Heart left ventricle (tissue), 16 donors: ENCODE measurements at regions of chr14 and their contacts with region 1.

Region 1: GRCh38 chr14:103552011-103552845 is 10.2 kb downstream of the BAG5 start:
- DNase-seq: peak in 3 of 5 donors; percentile 49 to 80 (median 61)
- ATAC-seq: peak; percentile 27 to 57 (median 40)
- H3K4me3 ChIP-seq: peak overlapping the region in 8 of 12 donors; percentile 24 to 43 (median 30)
- H3K27ac ChIP-seq: peak overlapping the region; percentile 63 to 98 (median 91)
- H3K4me1 ChIP-seq: peaks cover 0 to 83% (median 45%) of the 10 kb centered on the region in 12 donors
- H3K27me3 ChIP-seq: no peaks in the 10 kb centered on the region
- CTCF ChIP-seq: no peak
- POLR2A ChIP-seq: no peak

Region 2: GRCh38 chr14:103518422-103519042 is 33.7 kb before region 1 on chr14:
- intact Hi-C with region 1: loop called in 4 of 10 experiments (anchors 2 to 5 kb)
- DNase-seq: peak; percentile 64 to 85 (median 70)
- ATAC-seq: peak; percentile 34 to 62 (median 42)
- H3K4me3 ChIP-seq: no peak overlapping the region
- H3K27ac ChIP-seq: peak overlapping the region in 9 of 12 donors; percentile 2 to 96 (median 56)
- H3K4me1 ChIP-seq: peaks cover 0 to 79% (median 52%) of the 10 kb centered on the region in 12 donors
- H3K27me3 ChIP-seq: peaks cover 0 to 27% (median 0%) of the 10 kb centered on the region in 9 donors
- CTCF ChIP-seq: peak; percentile 83 to 97 (median 91)
- POLR2A ChIP-seq: no peak

Region 3: DNA sequence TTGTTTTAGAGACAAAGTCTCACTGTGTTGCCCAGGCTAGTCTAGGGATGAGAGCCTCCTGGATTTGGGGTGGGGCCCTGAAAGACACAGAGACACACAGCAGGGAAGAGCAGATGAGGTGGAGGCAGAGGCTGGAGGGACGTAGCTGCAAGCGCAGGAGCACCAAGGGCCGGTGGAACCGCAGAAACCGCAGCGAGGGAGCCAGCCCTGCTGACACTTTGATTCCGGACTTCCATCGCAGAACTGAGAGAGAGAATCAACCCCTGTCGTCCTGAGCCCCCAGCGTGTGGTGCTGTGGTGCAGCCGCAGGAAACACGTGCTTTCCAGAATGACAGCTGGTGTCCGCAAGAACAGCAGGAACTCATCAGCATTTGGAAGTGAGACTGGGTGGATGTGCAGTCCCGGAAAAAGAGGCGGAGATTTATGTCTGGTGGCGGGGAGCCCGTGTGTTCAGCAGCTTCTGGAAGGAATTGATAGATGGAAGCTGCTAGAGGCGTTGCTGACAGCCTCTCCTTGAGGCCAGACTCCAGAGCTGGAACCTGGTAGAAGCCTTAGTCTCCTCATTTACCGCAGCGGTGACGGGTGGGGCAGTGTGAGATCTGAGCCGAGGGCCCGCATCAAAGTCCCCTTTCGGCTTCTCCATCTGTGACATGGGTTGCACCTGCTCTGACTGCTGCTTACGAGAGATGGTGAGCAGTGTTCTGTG is 54.9 kb after region 1 on chr14:
- intact Hi-C with region 1: no loop called
- DNase-seq: peak; percentile 83 to 88 (median 84)
- ATAC-seq: peak; percentile 83 to 94 (median 92)
- H3K4me3 ChIP-seq: peak overlapping the region in 9 of 12 donors; percentile 17 to 43 (median 33)
- H3K27ac ChIP-seq: peak overlapping the region in 6 of 12 donors; percentile 3 to 59 (median 40)
- H3K4me1 ChIP-seq: peaks cover 0 to 27% (median 20%) of the 10 kb centered on the region in 12 donors
- H3K27me3 ChIP-seq: no peaks in the 10 kb centered on the region
- CTCF ChIP-seq: peak in 10 of 12 donors; percentile 6 to 59 (median 28)
- POLR2A ChIP-seq: no peak